HCT116 (cell line): ENCODE measurements at regions of chr6 and their contacts with region 1.

Region 1: DNA sequence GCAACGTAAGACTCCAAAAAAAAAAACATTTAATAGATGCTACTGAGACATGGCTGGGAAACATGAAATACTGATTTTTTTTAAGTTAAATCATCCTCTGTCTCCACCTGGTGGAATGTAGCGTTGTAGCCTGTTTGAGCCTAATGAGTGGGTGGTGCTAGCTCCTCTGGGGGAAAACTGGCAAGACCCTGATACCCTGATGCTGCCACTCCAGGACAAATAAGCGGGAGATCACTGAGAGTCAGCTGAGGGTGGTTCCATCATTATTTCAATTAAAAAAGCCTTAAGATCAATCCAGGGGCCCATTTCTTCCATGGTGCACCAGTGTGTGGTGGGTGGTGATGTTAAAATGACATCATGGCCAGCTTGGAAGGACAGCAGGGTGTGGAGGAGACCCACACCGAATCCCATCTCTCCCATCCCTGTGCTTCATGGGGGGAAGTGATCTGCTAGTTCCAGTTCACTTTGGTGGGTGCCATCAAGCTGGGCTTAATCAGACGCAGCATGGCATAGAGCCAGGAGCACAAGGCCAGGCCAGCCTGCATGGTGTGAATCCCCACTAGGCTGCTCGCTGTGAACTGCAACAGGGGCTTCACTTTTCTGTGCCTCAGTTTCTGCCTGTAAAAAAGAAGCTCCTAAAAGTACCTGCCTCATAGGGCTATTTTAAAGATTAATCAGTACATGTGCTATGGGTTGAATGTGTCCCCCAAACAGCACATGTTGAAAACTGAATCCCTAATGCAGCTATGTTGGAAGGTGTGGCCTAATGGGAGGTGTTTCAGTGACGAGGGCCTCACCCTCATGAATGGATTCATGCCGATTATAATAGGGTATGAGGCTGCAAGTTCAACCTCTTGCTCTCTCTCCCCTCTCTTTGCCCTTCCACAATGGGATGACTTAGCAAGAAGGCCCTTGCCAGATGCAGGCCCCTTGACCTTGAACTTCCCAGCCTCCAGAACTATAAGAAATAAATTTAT is 13.0 kb upstream of the MRPS10 start:
- DNase-seq: no peak
- ATAC-seq: no peak
- H3K4me3 ChIP-seq: no peak overlapping the region
- H3K27ac ChIP-seq: no peak overlapping the region
- H3K4me1 ChIP-seq: peaks cover 32 to 54% of the 10 kb centered on the region in 2 experiments
- H3K27me3 ChIP-seq: no peaks in the 10 kb centered on the region
- CTCF ChIP-seq: peak; percentile 66 to 78 (median 72); a peak in 5 of 6 replicates
- POLR2A ChIP-seq: no peak
- RAD21 ChIP-seq: peak; percentile 84

Region 2: DNA sequence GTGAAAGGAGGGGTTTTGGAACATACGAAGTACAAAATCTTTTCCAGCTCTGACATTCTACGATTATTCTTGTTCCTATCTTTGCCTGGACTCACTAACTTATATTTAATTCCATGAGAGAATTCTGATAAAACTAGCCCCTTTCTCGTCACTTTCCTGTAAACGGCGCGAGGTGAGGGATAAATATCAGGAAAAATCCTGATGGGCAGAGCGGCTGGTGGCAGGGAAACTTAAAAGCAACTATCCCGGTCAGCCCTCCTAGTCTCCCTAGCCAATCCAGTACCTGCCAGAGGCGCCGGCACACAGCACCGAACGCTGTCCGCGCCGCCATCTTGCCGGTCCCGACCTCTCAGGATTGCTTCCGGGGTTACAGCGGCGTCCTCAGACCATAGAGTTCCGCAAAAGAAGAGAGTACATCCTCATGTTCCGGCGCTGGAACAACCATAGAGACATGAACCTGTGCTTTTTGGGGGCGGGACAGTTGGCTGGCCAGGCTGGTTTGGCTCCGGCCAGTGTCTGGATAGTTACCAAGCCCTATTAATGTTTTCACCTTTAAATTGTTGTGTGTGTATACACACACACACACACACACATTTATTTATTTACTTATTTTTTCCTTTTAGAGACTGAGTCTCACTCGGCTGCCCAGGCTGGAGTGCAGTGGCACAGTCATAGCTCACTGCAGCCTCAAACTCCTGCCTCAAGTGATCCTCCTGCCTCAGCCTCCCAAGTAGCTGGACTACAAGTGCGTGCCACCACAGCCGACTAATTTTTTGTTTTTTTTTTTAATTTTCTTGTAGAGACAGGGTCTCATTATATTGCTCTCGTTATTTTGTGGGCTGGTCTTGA is 12.9 kb before region 1 on chr6 and contains the start of gene MRPS10:
- CTCF ChIA-PET with region 1: interaction called, 13 read pairs
- POLR2A ChIA-PET with region 1: interaction called, 8 read pairs
- RAD21 ChIA-PET with region 1: no interaction called
- intact Hi-C with region 1: no loop called
- DNase-seq: peak; percentile 95
- ATAC-seq: peak; percentile 95
- H3K4me3 ChIP-seq: peak within 1 kb of the TSS; percentile 72 to 97
- H3K27ac ChIP-seq: peak within 1 kb of the TSS; percentile 68
- H3K4me1 ChIP-seq: peaks cover 8 to 59% of the 10 kb centered on the region in 2 experiments; a peak in 3 of 4 replicates
- H3K27me3 ChIP-seq: no peaks in the 10 kb centered on the region
- CTCF ChIP-seq: no peak
- POLR2A ChIP-seq: peak; percentile 71
- RAD21 ChIP-seq: peak; percentile 19; the same call in 1 of the 2 replicates
- total RNA-seq, gene MRPS10: 62.1 TPM